ENCODE measurements at regions of chr10 and their contacts with region 1.

Region 1: DNA sequence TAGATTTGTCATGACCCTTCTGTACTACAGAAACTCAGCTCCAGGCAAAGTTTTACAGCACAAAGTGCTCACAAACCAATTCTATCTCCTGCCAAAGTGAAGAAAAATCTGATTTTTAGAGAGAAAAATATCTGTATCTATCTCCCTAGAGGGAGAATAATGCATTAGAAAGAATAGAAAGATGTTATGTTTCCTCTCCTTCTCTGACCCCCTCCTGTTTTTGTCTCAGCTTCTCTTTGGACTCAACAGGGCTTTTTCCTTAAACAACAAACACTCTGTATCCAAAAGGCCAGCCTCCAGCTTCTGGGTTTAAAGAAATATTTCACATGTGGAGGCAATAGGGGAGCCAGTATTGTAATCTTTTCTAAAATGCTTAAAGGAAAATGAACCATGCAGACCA is 627.4 kb downstream of the REEP3 start:
- DNase-seq: no peak
- CTCF ChIP-seq: no peak

Region 2: GRCh38 chr10:63376560-63377304 is 771.9 kb before region 1 on chr10:
- CTCF ChIA-PET with region 1: no interaction called
- POLR2A ChIA-PET with region 1: no interaction called
- DNase-seq: peak; percentile 60
- CTCF ChIP-seq: no peak

Region 3: GRCh38 chr10:63987212-63987611 is 161.4 kb before region 1 on chr10:
- CTCF ChIA-PET with region 1: no interaction called
- POLR2A ChIA-PET with region 1: no interaction called
- DNase-seq: no peak
- CTCF ChIP-seq: no peak

Region 4: DNA sequence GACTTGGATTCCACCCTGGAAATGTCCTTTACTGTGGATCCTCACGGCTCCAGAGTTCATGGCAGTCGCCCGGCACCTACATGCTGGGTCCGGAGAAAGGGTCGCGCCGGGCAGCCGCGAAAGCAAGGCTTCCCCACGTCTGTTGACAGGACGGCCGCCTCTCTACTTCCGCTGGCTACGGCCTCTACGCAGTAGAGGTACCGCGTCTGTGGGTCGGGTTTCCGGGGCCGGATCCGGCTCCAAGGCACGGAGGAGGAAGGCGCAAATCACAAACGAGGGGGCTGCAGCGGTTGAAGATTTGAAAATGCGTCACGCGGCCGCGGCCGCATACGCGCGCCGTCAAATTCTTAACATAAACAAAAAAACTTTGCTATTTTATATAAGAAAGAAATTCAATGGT is 22.2 kb after region 1 on chr10:
- CTCF ChIA-PET with region 1: interaction called, 14 read pairs
- POLR2A ChIA-PET with region 1: no interaction called
- DNase-seq: no peak
- CTCF ChIP-seq: no peak

Region 5: DNA sequence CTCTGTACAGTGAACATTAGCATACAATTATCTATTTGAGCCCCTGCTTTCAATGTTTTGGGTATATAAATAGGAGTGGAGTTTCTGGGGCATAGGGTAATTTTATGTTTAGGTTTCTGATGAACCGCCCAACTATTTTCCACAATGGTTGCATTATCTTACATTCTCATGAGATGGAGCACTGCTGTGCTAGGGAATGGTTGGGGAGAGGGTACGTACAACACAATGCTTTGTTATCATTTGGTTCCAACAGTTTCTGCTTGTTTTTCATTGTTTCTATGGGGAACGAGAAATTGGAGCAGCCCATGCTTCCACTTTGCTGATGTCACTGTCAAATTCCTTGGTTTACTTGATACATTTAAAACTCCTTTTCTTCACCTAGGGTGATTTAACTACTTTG is 487.9 kb after region 1 on chr10:
- CTCF ChIA-PET with region 1: no interaction called
- POLR2A ChIA-PET with region 1: no interaction called
- DNase-seq: no peak
- CTCF ChIP-seq: no peak

Measured in GM10248 (cell line).